ENCODE measurements at regions of chr6 and their contacts with region 1.

Region 1: DNA sequence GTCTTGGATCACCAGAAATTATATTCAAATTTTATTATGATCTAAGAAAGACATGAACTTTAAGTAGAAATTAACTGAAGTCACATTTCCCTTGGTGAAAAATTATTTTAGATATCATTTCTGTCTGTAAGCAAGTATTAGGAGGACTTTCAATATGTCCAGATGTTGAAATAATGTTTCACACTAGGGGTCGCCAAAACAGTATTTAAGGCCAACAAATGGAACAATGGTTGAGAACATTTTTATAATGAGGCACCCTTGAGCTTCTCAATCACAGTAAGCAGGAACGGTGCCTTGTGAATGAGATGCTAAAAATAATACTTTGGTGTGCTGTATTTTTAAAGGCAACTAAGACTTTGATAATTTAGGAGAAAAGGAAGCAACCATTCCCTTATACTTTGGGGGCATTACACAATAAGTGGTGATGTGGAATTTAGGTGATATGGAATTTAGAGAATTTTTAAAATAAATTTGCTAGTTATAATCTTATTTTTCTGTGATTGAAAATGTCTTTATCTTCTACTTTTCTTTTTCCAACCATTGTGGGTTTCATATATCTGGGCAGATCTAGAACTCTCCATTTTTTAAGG is 9.6 kb upstream of the SF3B5 start:
- DNase-seq: peak; percentile 58
- H3K4me3 ChIP-seq: no peak overlapping the region
- H3K27ac ChIP-seq: no peak overlapping the region
- H3K4me1 ChIP-seq: no peaks in the 10 kb centered on the region
- H3K27me3 ChIP-seq: no peaks in the 10 kb centered on the region
- CTCF ChIP-seq: peak; percentile 13 to 76 (median 53)
- POLR2A ChIP-seq: no peak

Region 2: GRCh38 chr6:143549221-143549941 is 555.6 kb before region 1 on chr6:
- intact Hi-C with region 1: no loop called
- DNase-seq: no peak
- H3K4me3 ChIP-seq: no peak overlapping the region
- H3K27ac ChIP-seq: no peak overlapping the region
- H3K4me1 ChIP-seq: no peaks in the 10 kb centered on the region
- H3K27me3 ChIP-seq: no peaks in the 10 kb centered on the region
- CTCF ChIP-seq: no peak
- POLR2A ChIP-seq: no peak

Region 3: GRCh38 chr6:144482142-144482541 is 377.1 kb after region 1 on chr6:
- intact Hi-C with region 1: loop called (anchors 2 kb)
- DNase-seq: peak; percentile 82
- H3K4me3 ChIP-seq: no peak overlapping the region
- H3K27ac ChIP-seq: no peak overlapping the region
- H3K4me1 ChIP-seq: no peaks in the 10 kb centered on the region
- H3K27me3 ChIP-seq: no peaks in the 10 kb centered on the region
- CTCF ChIP-seq: peak; percentile 57 to 77 (median 60)
- POLR2A ChIP-seq: no peak